ENCODE measurements at regions of chr2 and their contacts with region 1.

Region 1: DNA sequence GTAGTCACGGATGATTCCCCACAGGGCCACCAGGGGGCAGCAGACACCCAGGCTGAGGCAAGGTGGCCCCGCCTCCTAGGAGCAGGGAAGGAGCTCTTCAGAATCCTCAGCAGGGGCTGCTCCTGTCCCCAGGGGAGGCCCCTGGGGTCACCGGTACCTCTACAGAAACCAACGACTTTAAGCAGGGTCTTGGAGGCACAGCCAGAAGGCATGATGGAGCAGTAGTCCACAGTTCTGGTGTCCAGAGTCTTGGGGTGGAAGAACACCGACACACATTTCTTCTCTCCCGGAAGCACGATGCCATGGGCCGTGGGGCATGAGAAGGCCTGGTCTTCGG is 11.5 kb downstream of the CFAP65 start:
- DNase-seq: peak; percentile 79
- ATAC-seq: peak; percentile 89
- H3K4me3 ChIP-seq: no peak overlapping the region
- H3K4me3 Mint-ChIP-seq: no peak overlapping the region
- H3K27ac ChIP-seq: no peak overlapping the region
- H3K27ac Mint-ChIP-seq: no peak overlapping the region
- H3K4me1 ChIP-seq: no peaks in the 10 kb centered on the region
- H3K4me1 Mint-ChIP-seq: no peaks in the 10 kb centered on the region
- H3K27me3 ChIP-seq: peaks cover 0 to 18% (median 2%) of the 10 kb centered on the region in 4 experiments
- H3K27me3 Mint-ChIP-seq: peaks cover 44% of the 10 kb centered on the region
- CTCF ChIP-seq: peak; percentile 99

Region 2: DNA sequence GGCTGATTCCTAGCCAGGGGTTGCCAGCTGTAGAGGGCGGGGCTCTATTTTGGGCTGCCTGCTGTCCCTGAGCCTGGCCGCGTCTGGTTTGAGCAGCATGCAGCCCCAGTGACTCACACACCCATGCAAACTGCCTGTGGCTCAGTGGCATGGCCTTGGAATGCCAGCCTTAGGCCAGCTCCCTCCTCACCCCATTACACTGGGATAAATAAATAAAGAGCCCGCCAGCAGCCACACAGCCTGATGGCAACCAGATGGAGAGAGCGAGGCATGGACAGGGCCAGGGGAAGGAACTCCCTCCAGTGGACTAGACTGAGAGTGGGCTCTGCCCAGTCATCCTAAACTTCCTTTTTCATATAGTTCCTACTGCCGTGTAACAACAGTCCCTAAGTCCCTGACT is 112.5 kb after region 1 on chr2:
- CTCF ChIA-PET with region 1: interaction called, 4 read pairs
- POLR2A ChIA-PET with region 1: no interaction called
- intact Hi-C with region 1: loop called (anchors 2 kb)
- DNase-seq: no peak
- ATAC-seq: no peak
- H3K4me3 ChIP-seq: no peak overlapping the region
- H3K4me3 Mint-ChIP-seq: no peak overlapping the region
- H3K27ac ChIP-seq: no peak overlapping the region
- H3K27ac Mint-ChIP-seq: no peak overlapping the region
- H3K4me1 ChIP-seq: no peaks in the 10 kb centered on the region
- H3K4me1 Mint-ChIP-seq: no peaks in the 10 kb centered on the region
- H3K27me3 ChIP-seq: no peaks in the 10 kb centered on the region
- H3K27me3 Mint-ChIP-seq: no peaks in the 10 kb centered on the region
- CTCF ChIP-seq: no peak

Region 3: GRCh38 chr2:219206442-219207253 is 176.9 kb after region 1 on chr2 and contains the start of gene ZFAND2B:
- CTCF ChIA-PET with region 1: no interaction called
- POLR2A ChIA-PET with region 1: no interaction called
- intact Hi-C with region 1: no loop called
- DNase-seq: peak; percentile 97
- ATAC-seq: peak; percentile 91
- H3K4me3 ChIP-seq: peak within 1 kb of the TSS; percentile 53 to 82 (median 76)
- H3K4me3 Mint-ChIP-seq: peak within 1 kb of the TSS; percentile 96
- H3K27ac ChIP-seq: peak within 1 kb of the TSS; percentile 84 to 94
- H3K27ac Mint-ChIP-seq: peak within 1 kb of the TSS; percentile 98
- H3K4me1 ChIP-seq: peaks cover 16 to 23% of the 10 kb centered on the region in 2 donors
- H3K4me1 Mint-ChIP-seq: peaks cover 28% of the 10 kb centered on the region
- H3K27me3 ChIP-seq: no peaks in the 10 kb centered on the region
- H3K27me3 Mint-ChIP-seq: no peaks in the 10 kb centered on the region
- CTCF ChIP-seq: no peak
- total RNA-seq, gene ZFAND2B: 55.2 and 58.7 TPM in 2 replicates

Measured in B cell (primary cell).